PC-3 (cell line): ENCODE measurements at regions of chr2 and their contacts with region 1.

Region 1: DNA sequence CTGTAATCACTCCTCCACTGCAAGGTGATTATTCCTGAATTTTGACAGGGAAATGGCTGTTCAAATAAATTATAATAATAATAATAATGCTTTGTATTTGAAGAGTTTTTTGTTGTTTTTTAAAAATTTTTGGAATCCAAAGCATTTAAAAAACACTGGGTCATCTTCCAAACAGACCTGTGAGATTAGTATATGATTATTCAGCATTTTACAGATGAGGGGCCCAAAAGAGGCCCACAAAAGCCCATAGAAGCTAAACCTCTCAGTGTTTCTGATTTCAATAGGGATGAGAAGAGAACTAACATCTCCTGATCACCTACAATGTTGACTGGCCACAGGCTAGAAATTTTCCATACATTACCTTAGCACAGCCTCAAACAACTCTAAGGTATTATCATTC is 8.0 kb upstream of the POLR2D start:
- DNase-seq: no peak
- ATAC-seq: no peak
- H3K4me3 ChIP-seq: no peak overlapping the region
- H3K27ac ChIP-seq: no peak overlapping the region
- H3K4me1 ChIP-seq: no peaks in the 10 kb centered on the region
- H3K27me3 ChIP-seq: no peaks in the 10 kb centered on the region
- CTCF ChIP-seq: no peak

Region 2: DNA sequence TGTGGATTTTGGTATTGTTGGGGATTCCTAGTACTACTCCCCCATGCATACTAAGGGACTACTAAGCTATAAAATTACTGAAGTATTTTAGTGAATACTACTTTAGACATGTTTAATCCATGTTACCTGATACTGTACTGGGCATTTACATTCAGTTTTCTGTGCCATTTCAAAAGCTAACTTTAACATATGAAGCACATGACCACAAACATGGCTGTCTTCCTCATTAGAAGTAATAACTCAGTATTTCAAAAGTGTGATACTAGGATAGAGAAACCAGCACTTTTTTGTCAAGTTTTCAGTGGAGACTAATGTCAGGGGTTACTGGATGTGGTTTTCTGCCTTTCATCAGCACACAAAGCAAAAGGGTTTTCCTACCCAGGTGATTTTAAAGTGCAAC is 82.8 kb before region 1 on chr2:
- CTCF ChIA-PET with region 1: no interaction called
- POLR2A ChIA-PET with region 1: interaction called, 18 read pairs
- intact Hi-C with region 1: no loop called
- DNase-seq: no peak
- ATAC-seq: no peak
- H3K4me3 ChIP-seq: no peak overlapping the region
- H3K27ac ChIP-seq: no peak overlapping the region
- H3K4me1 ChIP-seq: no peaks in the 10 kb centered on the region
- H3K27me3 ChIP-seq: no peaks in the 10 kb centered on the region
- CTCF ChIP-seq: no peak